GM12878 (cell line): ENCODE measurements at regions of chr16 and their contacts with region 1.

Region 1: GRCh38 chr16:21590287-21590686 is 9.1 kb upstream of the METTL9 start:
- DNase-seq: no peak
- ATAC-seq: no peak
- H3K4me3 ChIP-seq: no peak overlapping the region
- H3K27ac ChIP-seq: no peak overlapping the region
- H3K4me1 ChIP-seq: 0 out of 2 replicates have a peak, but pooled peaks cover 2% of the 10 kb centered on the region
- H3K27me3 ChIP-seq: no peaks in the 10 kb centered on the region
- CTCF ChIP-seq: no peak
- EP300 ChIP-seq: no peak
- POLR2A ChIP-seq: no peak
- RAD21 ChIP-seq: no peak

Region 2: DNA sequence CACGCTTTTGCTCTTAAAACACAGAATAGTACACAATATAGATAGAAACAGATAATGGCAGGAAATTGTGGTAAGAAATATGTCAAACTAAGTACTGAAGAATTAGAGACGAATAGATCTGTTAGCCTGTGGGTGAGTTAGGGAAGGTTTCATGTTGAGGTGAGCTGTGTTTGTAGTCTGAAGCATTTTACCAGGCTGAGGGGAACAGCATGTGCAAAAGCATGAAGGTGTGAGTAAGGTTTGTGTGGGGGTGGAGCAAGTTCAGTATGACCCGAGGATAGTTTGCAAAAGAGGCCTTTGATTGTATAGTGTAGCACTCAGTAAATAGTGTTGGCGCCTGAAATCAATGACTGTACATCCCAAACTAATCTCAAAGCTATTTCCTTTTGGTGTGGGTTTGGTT is 48.3 kb after region 1 on chr16:
- CTCF ChIA-PET with region 1: interaction called, 89 read pairs
- POLR2A ChIA-PET with region 1: interaction called, 3 read pairs
- RAD21 ChIA-PET with region 1: interaction called, 8 read pairs
- SMC1A ChIA-PET with region 1: interaction called, 204 read pairs
- in situ Hi-C with region 1: no loop called
- intact Hi-C with region 1: no loop called
- DNase-seq: no peak
- ATAC-seq: peak; percentile 81
- H3K4me3 ChIP-seq: no peak overlapping the region
- H3K27ac ChIP-seq: no peak overlapping the region
- H3K4me1 ChIP-seq: 0 out of 2 replicates have a peak, but pooled peaks cover 2% of the 10 kb centered on the region
- H3K27me3 ChIP-seq: no peaks in the 10 kb centered on the region
- CTCF ChIP-seq: no peak
- EP300 ChIP-seq: no peak
- POLR2A ChIP-seq: no peak
- RAD21 ChIP-seq: no peak